A673 (cell line): ENCODE measurements at regions of chr15 and their contacts with region 1.

Region 1: DNA sequence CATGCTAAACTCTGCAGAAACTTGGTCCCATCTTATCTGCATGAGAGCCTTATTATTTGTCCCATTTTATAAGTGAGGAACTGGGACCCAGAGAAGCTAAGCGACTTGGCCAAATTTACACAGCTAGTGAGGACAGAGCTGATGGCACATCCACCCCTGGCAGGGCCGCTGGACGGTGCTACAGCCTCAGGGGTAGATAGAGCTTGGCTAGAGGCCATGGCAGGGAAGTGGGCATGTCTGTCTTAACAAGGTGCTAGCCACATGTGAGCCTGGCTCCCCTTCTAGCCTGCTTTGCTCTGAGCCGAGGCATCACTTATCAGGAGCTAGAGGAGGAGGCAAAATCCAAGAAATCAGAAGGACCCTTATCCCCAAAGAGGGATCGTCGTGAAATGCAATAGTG is 36.7 kb upstream of the SYNM start:
- DNase-seq: no peak
- H3K4me3 ChIP-seq: no peak overlapping the region
- H3K27ac ChIP-seq: no peak overlapping the region
- H3K4me1 ChIP-seq: no peaks in the 10 kb centered on the region
- H3K27me3 ChIP-seq: no peaks in the 10 kb centered on the region
- CTCF ChIP-seq: no peak

Region 2: GRCh38 chr15:98658831-98659699 is 409.1 kb before region 1 on chr15:
- CTCF ChIA-PET with region 1: no interaction called
- POLR2A ChIA-PET with region 1: no interaction called
- intact Hi-C with region 1: loop called (anchors 10 kb)
- DNase-seq: peak; percentile 67
- H3K4me3 ChIP-seq: no peak overlapping the region
- H3K27ac ChIP-seq: no peak overlapping the region
- H3K4me1 ChIP-seq: no peaks in the 10 kb centered on the region
- H3K27me3 ChIP-seq: no peaks in the 10 kb centered on the region
- CTCF ChIP-seq: peak; percentile 91

Region 3: DNA sequence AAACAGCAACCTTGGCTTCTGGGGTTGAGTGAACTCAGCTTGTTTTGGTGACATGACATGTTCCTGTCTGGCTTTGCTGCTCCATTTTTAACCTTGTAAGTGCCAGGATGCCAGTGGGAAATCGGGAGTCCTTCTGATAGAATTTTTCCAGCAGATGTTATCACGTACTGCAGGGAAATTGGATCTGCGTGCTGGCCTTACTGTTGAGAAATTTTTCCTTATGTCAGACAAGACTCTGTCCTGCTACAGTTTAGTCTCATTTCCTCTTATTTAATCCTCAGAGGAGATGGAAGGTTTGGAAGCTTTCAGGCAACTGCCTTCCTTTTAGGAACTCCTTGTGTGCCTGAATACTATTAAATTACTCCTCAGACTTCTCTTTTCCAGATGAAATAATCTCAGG is 141.2 kb before region 1 on chr15:
- CTCF ChIA-PET with region 1: no interaction called
- POLR2A ChIA-PET with region 1: no interaction called
- intact Hi-C with region 1: no loop called
- DNase-seq: no peak
- H3K4me3 ChIP-seq: no peak overlapping the region
- H3K27ac ChIP-seq: no peak overlapping the region
- H3K4me1 ChIP-seq: no peaks in the 10 kb centered on the region
- H3K27me3 ChIP-seq: no peaks in the 10 kb centered on the region
- CTCF ChIP-seq: no peak

Region 4: GRCh38 chr15:99305761-99306505 is 237.7 kb after region 1 on chr15:
- CTCF ChIA-PET with region 1: no interaction called
- POLR2A ChIA-PET with region 1: interaction called, 10 read pairs
- intact Hi-C with region 1: no loop called
- DNase-seq: peak; percentile 85
- H3K4me3 ChIP-seq: peak overlapping the region; percentile 23
- H3K27ac ChIP-seq: peak overlapping the region; percentile 44
- H3K4me1 ChIP-seq: peaks cover 29% of the 10 kb centered on the region
- H3K27me3 ChIP-seq: no peaks in the 10 kb centered on the region
- CTCF ChIP-seq: no peak

Region 5: DNA sequence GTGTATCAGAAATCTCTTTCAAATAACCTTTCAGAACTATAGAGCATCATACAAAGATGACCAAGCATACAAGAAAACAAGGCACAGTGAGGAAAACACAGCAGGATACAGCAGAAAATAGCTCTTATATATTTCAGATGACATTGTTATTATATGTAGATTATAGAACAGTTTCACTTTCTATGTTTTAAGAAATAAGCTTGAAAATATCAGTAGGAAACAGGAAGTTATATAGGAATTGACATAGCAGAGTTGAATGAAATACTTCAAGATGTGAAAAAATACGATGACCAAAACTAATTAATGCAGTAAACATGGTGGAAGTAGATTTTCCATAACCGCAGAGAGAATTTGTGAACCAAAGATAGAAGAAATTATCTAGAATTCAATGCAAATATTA is 589.8 kb after region 1 on chr15:
- CTCF ChIA-PET with region 1: no interaction called
- POLR2A ChIA-PET with region 1: no interaction called
- intact Hi-C with region 1: no loop called
- DNase-seq: no peak
- H3K4me3 ChIP-seq: no peak overlapping the region
- H3K27ac ChIP-seq: no peak overlapping the region
- H3K4me1 ChIP-seq: no peaks in the 10 kb centered on the region
- H3K27me3 ChIP-seq: no peaks in the 10 kb centered on the region
- CTCF ChIP-seq: no peak